ENCODE measurements at regions of chr13 and their contacts with region 1.

Region 1: GRCh38 chr13:29707876-29708543 is 112.5 kb upstream of the SLC7A1 start:
- DNase-seq: peak; percentile 50 to 56 (median 54)
- ATAC-seq: peak; percentile 98
- H3K4me3 ChIP-seq: no peak overlapping the region
- H3K27ac ChIP-seq: no peak overlapping the region
- H3K4me1 ChIP-seq: no peaks in the 10 kb centered on the region
- H3K27me3 ChIP-seq: peaks cover 6 to 15% of the 10 kb centered on the region in 2 experiments; a peak in 4 of 5 replicates
- CTCF ChIP-seq: peak; percentile 71 to 72 (median 72)
- EP300 ChIP-seq: no peak
- POLR2A ChIP-seq: no peak
- RAD21 ChIP-seq: peak; percentile 34 to 74

Region 2: GRCh38 chr13:28819735-28820098 is 888.3 kb before region 1 on chr13:
- CTCF ChIA-PET with region 1: no interaction called
- POLR2A ChIA-PET with region 1: no interaction called
- in situ Hi-C with region 1: loop called (anchors 25 kb)
- intact Hi-C with region 1: no loop called
- DNase-seq: peak; percentile 61 to 78 (median 76)
- ATAC-seq: peak; percentile 99
- H3K4me3 ChIP-seq: peak overlapping the region; percentile 8; the same call in 1 of the 2 replicates
- H3K27ac ChIP-seq: no peak overlapping the region
- H3K4me1 ChIP-seq: peaks cover 0 to 13% of the 10 kb centered on the region in 2 experiments; a peak in 2 of 5 replicates
- H3K27me3 ChIP-seq: peaks cover 0 to 16% of the 10 kb centered on the region in 2 experiments; a peak in 2 of 5 replicates
- CTCF ChIP-seq: peak in 2 of 3 experiments; percentile 52 to 83; a peak in 4 of 6 replicates
- EP300 ChIP-seq: no peak
- POLR2A ChIP-seq: no peak
- RAD21 ChIP-seq: peak in 1 of 2 experiments; percentile 48; a peak in 2 of 4 replicates

Region 3: GRCh38 chr13:29508130-29508875 is 199.7 kb before region 1 on chr13:
- CTCF ChIA-PET with region 1: interaction called, 4 read pairs
- POLR2A ChIA-PET with region 1: interaction called, 3 read pairs
- in situ Hi-C with region 1: no loop called
- intact Hi-C with region 1: loop called (anchors 2 kb)
- DNase-seq: peak; percentile 73 to 79 (median 78)
- ATAC-seq: peak; percentile 90
- H3K4me3 ChIP-seq: no peak overlapping the region
- H3K27ac ChIP-seq: no peak overlapping the region
- H3K4me1 ChIP-seq: no peaks in the 10 kb centered on the region; a peak in 2 of 5 replicates
- H3K27me3 ChIP-seq: peaks cover 2 to 17% of the 10 kb centered on the region in 2 experiments; a peak in 2 of 5 replicates
- CTCF ChIP-seq: peak; percentile 77 to 83 (median 80)
- EP300 ChIP-seq: no peak
- POLR2A ChIP-seq: no peak
- RAD21 ChIP-seq: peak; percentile 66 to 71

Region 4: GRCh38 chr13:29514323-29515310 is 193.4 kb before region 1 on chr13:
- CTCF ChIA-PET with region 1: interaction called, 3 read pairs
- POLR2A ChIA-PET with region 1: no interaction called
- in situ Hi-C with region 1: loop called (anchors 5 kb)
- intact Hi-C with region 1: loop called (anchors 2 kb)
- DNase-seq: no peak
- ATAC-seq: no peak
- H3K4me3 ChIP-seq: no peak overlapping the region
- H3K27ac ChIP-seq: no peak overlapping the region
- H3K4me1 ChIP-seq: peaks cover 0 to 6% of the 10 kb centered on the region in 2 experiments; a peak in 1 of 5 replicates
- H3K27me3 ChIP-seq: no peaks in the 10 kb centered on the region
- CTCF ChIP-seq: no peak
- EP300 ChIP-seq: no peak
- POLR2A ChIP-seq: no peak
- RAD21 ChIP-seq: no peak

Measured in K562 (cell line).